ENCODE measurements at regions of chr1 and their contacts with region 1.

Region 1: GRCh38 chr1:88655685-88656299 is 28.3 kb upstream of the PKN2 start:
- DNase-seq: no peak
- H3K4me3 ChIP-seq: no peak overlapping the region
- H3K27ac ChIP-seq: peak overlapping the region in 1 of 4 donors; percentile 14
- H3K4me1 ChIP-seq: peaks cover 0 to 15% (median 3%) of the 10 kb centered on the region in 4 donors
- H3K27me3 ChIP-seq: no peaks in the 10 kb centered on the region
- CTCF ChIP-seq: peak; percentile 52 to 79 (median 67)
- EP300 ChIP-seq: no peak
- POLR2A ChIP-seq: no peak

Region 2: GRCh38 chr1:88877382-88877825 is 221.6 kb after region 1 on chr1:
- in situ Hi-C with region 1: loop called in 1 of 4 experiments (anchors 10 kb)
- intact Hi-C with region 1: loop called (anchors 10 kb)
- DNase-seq: no peak
- H3K4me3 ChIP-seq: no peak overlapping the region
- H3K27ac ChIP-seq: no peak overlapping the region
- H3K4me1 ChIP-seq: peaks cover 0 to 27% (median 4%) of the 10 kb centered on the region in 4 donors
- H3K27me3 ChIP-seq: no peaks in the 10 kb centered on the region
- CTCF ChIP-seq: peak; percentile 59 to 67 (median 61)
- EP300 ChIP-seq: no peak
- POLR2A ChIP-seq: no peak

Region 3: DNA sequence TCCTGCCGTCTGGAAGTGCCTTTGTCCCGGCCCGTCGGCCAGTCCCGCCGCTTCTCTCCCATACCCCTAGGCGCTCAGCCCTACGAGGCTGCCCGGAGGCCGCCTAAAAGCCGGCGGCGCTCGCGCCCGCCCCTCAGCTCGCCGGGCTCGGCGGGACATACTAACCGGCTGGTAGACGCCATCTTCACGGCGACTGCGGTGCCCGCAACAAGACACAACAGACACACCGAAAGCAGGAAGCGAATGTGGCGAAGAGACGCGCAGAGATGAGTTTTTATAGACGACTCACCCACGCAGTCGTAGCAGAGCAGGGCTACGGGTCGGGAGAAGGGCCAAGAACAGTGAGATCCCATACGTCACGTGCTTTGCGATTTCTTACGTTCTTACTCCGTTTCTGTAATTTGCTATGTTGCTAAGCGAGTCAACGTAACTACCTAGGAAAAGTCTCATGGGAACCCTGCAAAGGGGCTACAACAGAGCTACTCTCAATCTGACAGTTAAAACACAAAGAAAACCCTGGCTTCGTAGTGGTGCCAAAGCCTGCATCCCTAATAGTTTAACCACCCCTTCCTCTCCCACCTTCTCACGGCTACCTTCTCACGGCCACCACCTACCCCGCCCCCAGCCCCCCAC is 235.6 kb after region 1 on chr1 and contains the start of gene GTF2B:
- in situ Hi-C with region 1: no loop called
- intact Hi-C with region 1: loop called (anchors 10 kb)
- DNase-seq: peak; percentile 95
- H3K4me3 ChIP-seq: peak within 1 kb of the TSS; percentile 63 to 99 (median 96)
- H3K27ac ChIP-seq: peak within 1 kb of the TSS; percentile 91 to 99 (median 98)
- H3K4me1 ChIP-seq: peaks cover 11 to 31% (median 21%) of the 10 kb centered on the region in 4 donors
- H3K27me3 ChIP-seq: no peaks in the 10 kb centered on the region
- CTCF ChIP-seq: peak in 2 of 5 experiments; percentile 10 to 29
- EP300 ChIP-seq: no peak
- POLR2A ChIP-seq: peak; percentile 99
- total RNA-seq, gene GTF2B: 6.0 to 30.4 (median 22.1) TPM

Measured in transverse colon (tissue), 4 donors.